B cell (primary cell): ENCODE measurements at regions of chr16 and their contacts with region 1.

Region 1: DNA sequence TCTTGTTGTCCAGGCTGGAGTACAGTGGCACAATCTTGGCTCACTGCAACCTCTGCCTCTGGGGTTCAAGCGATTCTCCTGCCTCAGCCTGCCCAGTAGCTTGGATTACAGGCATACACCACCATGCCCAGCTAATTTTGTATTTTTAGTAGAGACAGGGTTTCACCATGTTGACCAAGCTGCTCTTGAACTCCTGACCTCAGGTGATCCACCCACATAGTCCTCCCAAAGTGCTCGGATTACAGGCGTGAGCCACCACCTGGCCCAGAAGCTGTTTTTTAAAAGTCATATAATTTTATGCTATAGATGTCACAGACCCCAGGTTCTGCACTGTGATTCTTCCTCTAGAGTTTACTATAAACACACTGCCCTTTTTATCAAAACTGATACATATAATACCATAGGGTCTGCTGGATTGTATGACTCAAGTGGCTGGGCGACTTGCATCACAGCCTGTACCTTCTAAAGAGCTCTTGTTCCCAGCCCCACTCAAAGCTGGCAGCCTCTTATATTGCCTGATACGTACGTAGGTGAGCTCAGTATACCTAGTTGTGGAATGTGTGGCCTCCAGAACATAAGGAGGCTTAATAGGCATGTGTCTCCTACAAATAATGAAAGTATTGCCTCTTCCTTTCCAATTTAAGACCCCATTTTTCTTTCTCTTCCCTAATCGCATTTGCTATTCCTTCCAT is 295.8 kb downstream of the ZFHX3 start:
- DNase-seq: no peak
- ATAC-seq: no peak
- H3K4me3 ChIP-seq: no peak overlapping the region
- H3K4me3 Mint-ChIP-seq: no peak overlapping the region
- H3K27ac ChIP-seq: no peak overlapping the region
- H3K27ac Mint-ChIP-seq: no peak overlapping the region
- H3K4me1 ChIP-seq: no peaks in the 10 kb centered on the region
- H3K4me1 Mint-ChIP-seq: no peaks in the 10 kb centered on the region
- H3K27me3 ChIP-seq: no peaks in the 10 kb centered on the region
- H3K27me3 Mint-ChIP-seq: no peaks in the 10 kb centered on the region
- CTCF ChIP-seq: no peak

Region 2: DNA sequence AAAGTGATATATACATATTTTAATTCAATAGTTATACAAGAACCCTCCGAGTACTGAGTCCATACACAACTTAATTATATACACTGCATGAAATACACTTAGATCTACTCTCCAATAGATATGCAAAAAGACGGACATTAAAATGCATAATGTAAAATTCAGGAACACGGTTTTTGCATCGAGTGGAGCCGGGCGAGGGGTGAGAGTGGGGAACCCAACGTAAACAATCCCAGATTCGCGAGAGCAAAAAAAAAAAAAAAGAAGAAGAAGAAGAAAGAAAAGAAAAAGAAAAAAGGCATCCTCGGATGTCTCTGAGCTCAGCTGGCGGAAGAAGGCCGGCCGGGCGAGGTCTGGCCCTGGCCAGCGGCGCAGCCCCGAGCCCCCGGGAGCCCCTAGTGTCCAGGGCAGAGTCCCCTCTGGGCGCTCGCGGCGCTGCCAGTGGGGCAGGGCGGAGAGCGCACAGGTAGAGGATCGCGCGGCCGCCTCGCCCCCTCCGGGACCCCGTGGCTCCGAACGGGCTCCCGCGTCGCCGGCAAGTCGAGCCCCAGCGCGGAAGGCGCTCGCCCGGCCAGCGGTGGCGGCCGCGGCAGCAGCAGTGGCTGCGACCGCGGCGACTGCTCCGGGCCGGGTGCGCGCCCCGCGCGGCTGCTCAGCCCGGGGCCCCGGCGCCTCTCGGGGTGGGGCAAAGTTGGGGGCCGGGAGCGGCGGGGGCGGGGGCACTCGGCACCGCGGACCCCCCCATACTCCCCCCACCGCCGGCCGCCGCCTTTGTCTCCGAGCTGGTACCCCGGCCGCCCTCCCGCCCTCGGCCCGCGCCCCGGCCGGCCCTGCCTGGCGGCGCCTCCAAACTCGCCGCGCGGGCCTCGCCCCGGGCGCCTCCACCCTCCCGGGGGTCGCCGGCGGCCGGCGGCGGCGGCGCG is 305.4 kb after region 1 on chr16:
- CTCF ChIA-PET with region 1: no interaction called
- POLR2A ChIA-PET with region 1: interaction called, 14 read pairs
- intact Hi-C with region 1: no loop called
- DNase-seq: peak; percentile 58
- ATAC-seq: peak; percentile 54
- H3K4me3 ChIP-seq: peak overlapping the region in 4 of 5 experiments; percentile 34 to 58 (median 52)
- H3K4me3 Mint-ChIP-seq: peak overlapping the region; percentile 90
- H3K27ac ChIP-seq: no peak overlapping the region
- H3K27ac Mint-ChIP-seq: peak overlapping the region; percentile 76
- H3K4me1 ChIP-seq: peaks cover 18 to 22% of the 10 kb centered on the region in 2 donors
- H3K4me1 Mint-ChIP-seq: peaks cover 19% of the 10 kb centered on the region
- H3K27me3 ChIP-seq: peaks cover 6 to 28% (median 19%) of the 10 kb centered on the region in 4 experiments
- H3K27me3 Mint-ChIP-seq: peaks cover 30% of the 10 kb centered on the region
- CTCF ChIP-seq: no peak